ENCODE measurements at regions of chr19 and their contacts with region 1.

Region 1: GRCh38 chr19:45187421-45188100 is 9.0 kb downstream of the BLOC1S3 start:
- DNase-seq: peak; percentile 42 to 67 (median 62)
- H3K4me3 ChIP-seq: no peak overlapping the region
- H3K27ac ChIP-seq: no peak overlapping the region
- H3K4me1 ChIP-seq: peaks cover 0 to 14% (median 11%) of the 10 kb centered on the region in 4 experiments
- H3K27me3 ChIP-seq: no peaks in the 10 kb centered on the region

Region 2: DNA sequence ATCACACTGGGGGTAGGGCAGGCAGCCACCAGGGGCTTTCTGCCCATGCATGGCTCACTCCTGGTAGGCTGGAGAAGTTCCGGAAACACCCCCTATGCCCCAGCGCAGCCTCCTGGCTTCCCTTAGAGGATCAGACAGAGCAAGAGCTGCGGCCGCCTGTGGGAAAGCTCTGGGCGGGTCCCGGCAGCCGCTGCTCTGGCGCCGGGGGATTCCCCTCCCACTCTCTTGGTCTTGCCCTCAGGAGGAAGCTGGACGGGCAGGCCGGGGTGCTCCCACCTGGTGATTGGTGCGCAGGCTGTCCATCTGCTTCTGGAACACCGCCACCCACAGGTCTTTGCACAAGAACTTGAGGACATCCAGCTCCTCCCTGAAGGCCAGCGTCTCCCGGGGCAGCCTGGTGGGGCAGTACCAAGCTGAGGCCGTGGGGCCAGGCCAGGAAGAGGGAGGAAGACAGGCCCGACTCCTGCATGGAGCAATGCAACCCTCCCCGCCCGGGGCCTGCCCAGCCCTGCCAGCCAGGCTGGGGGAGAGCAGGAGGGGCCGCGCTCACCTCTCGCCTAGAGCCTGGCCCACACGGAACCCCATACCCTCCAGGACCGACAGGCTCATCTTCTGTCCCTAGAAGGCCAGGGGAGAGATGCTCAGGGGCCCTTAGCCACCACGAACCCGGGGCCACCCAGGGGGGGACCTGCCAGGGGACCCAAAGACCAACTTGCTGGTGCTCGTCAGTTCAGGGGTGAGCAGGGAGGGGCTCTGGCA is 22.8 kb before region 1 on chr19:
- CTCF ChIA-PET with region 1: interaction called, 15 read pairs
- POLR2A ChIA-PET with region 1: no interaction called
- DNase-seq: peak; percentile 37 to 82 (median 81)
- H3K4me3 ChIP-seq: peak overlapping the region in 2 of 7 experiments; percentile 1 to 4
- H3K27ac ChIP-seq: no peak overlapping the region
- H3K4me1 ChIP-seq: peaks cover 0 to 44% (median 29%) of the 10 kb centered on the region in 4 experiments
- H3K27me3 ChIP-seq: no peaks in the 10 kb centered on the region

Region 3: DNA sequence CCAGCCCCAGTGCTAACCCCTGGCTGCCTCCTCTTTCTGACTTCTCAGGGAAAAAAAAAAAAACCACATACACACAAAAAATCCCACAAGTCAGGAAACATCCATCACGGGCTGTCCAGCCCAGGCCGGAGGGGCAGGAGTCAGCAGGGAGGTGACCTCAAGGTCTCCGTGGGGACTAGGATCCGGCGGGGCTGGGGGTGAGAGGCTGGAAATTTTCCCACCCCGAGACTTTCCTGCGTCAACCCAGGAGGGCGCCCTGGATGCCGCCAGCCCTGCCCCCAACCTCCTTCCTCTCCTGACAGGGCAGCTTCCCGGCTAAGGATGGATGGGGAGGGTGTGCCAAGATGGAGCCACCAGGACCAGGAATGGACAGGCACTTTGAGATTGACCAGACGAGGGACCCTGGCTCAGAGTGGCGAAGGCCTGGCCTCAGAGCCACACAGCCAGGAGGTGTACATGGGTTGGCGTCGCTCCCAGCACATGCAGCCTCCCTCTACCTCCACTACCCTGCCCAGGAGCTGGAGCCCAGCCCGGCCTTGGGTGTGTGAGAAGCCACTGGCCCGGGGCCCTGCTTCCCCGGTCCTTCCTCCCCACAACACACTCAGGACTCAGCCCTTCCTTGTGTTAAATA is 24.3 kb after region 1 on chr19:
- CTCF ChIA-PET with region 1: no interaction called
- POLR2A ChIA-PET with region 1: no interaction called
- DNase-seq: peak in 2 of 3 donors; percentile 28 to 43
- H3K4me3 ChIP-seq: peak overlapping the region in 4 of 7 experiments; percentile 33 to 59 (median 42)
- H3K27ac ChIP-seq: no peak overlapping the region
- H3K4me1 ChIP-seq: peaks cover 0 to 28% (median 23%) of the 10 kb centered on the region in 4 experiments
- H3K27me3 ChIP-seq: peaks cover 0 to 18% (median 14%) of the 10 kb centered on the region in 5 experiments

Measured in common myeloid progenitor, CD34-positive (primary cell).